Activated CD8-positive, alpha-beta memory T cell treated with anti-CD3 and anti-CD28 coated beads, Interleukin-2, amount 10 ng/mL, durations not matched to agents 7 days and 5 days (primary cell): ENCODE measurements at regions of chr11 and their contacts with region 1.

Region 1: GRCh38 chr11:9534791-9535781 is 38.4 kb upstream of the WEE1 start:
- DNase-seq: peak; percentile 83
- ATAC-seq: peak; percentile 84
- H3K4me3 Mint-ChIP-seq: no peak overlapping the region
- H3K27ac Mint-ChIP-seq: no peak overlapping the region
- H3K4me1 Mint-ChIP-seq: peaks cover 3% of the 10 kb centered on the region
- H3K27me3 Mint-ChIP-seq: no peaks in the 10 kb centered on the region

Region 2: GRCh38 chr11:9489080-9489765 is 45.9 kb before region 1 on chr11:
- CTCF ChIA-PET with region 1: no interaction called
- DNase-seq: no peak
- ATAC-seq: no peak
- H3K4me3 Mint-ChIP-seq: no peak overlapping the region
- H3K27ac Mint-ChIP-seq: no peak overlapping the region
- H3K4me1 Mint-ChIP-seq: peaks cover 2% of the 10 kb centered on the region
- H3K27me3 Mint-ChIP-seq: no peaks in the 10 kb centered on the region

Region 3: GRCh38 chr11:9550191-9550628 is 15.1 kb after region 1 on chr11:
- CTCF ChIA-PET with region 1: interaction called, 11 read pairs
- DNase-seq: no peak
- ATAC-seq: no peak
- H3K4me3 Mint-ChIP-seq: no peak overlapping the region
- H3K27ac Mint-ChIP-seq: no peak overlapping the region
- H3K4me1 Mint-ChIP-seq: peaks cover 3% of the 10 kb centered on the region
- H3K27me3 Mint-ChIP-seq: no peaks in the 10 kb centered on the region

Region 4: GRCh38 chr11:9565822-9566560 is 30.9 kb after region 1 on chr11:
- CTCF ChIA-PET with region 1: interaction called, 28 read pairs
- DNase-seq: peak; percentile 87
- ATAC-seq: peak; percentile 97
- H3K4me3 Mint-ChIP-seq: peak overlapping the region; percentile 40
- H3K27ac Mint-ChIP-seq: peak overlapping the region; percentile 89
- H3K4me1 Mint-ChIP-seq: peaks cover 51% of the 10 kb centered on the region
- H3K27me3 Mint-ChIP-seq: peaks cover 5% of the 10 kb centered on the region

Region 5: GRCh38 chr11:9573052-9573774 is 38.1 kb after region 1 on chr11 and contains the start of gene WEE1:
- CTCF ChIA-PET with region 1: interaction called, 29 read pairs
- DNase-seq: peak; percentile 99
- ATAC-seq: peak; percentile 93
- H3K4me3 Mint-ChIP-seq: peak within 1 kb of the TSS; percentile 89
- H3K27ac Mint-ChIP-seq: peak within 1 kb of the TSS; percentile 87
- H3K4me1 Mint-ChIP-seq: peaks cover 34% of the 10 kb centered on the region
- H3K27me3 Mint-ChIP-seq: peaks cover 8% of the 10 kb centered on the region
- total RNA-seq, gene WEE1: 76.8 to 83.3 TPM

Region 6: GRCh38 chr11:9601037-9601875 is 66.2 kb after region 1 on chr11:
- CTCF ChIA-PET with region 1: interaction called, 20 read pairs
- DNase-seq: peak; percentile 93
- ATAC-seq: peak; percentile 83
- H3K4me3 Mint-ChIP-seq: peak overlapping the region; percentile 66
- H3K27ac Mint-ChIP-seq: peak overlapping the region; percentile 85
- H3K4me1 Mint-ChIP-seq: peaks cover 32% of the 10 kb centered on the region
- H3K27me3 Mint-ChIP-seq: peaks cover 18% of the 10 kb centered on the region

Region 7: GRCh38 chr11:9626496-9627394 is 91.7 kb after region 1 on chr11:
- CTCF ChIA-PET with region 1: no interaction called
- DNase-seq: no peak
- ATAC-seq: no peak
- H3K4me3 Mint-ChIP-seq: no peak overlapping the region
- H3K27ac Mint-ChIP-seq: no peak overlapping the region
- H3K4me1 Mint-ChIP-seq: no peaks in the 10 kb centered on the region
- H3K27me3 Mint-ChIP-seq: peaks cover 32% of the 10 kb centered on the region

Region 8: GRCh38 chr11:9653928-9654280 is 118.8 kb after region 1 on chr11:
- CTCF ChIA-PET with region 1: no interaction called
- DNase-seq: no peak
- ATAC-seq: no peak
- H3K4me3 Mint-ChIP-seq: no peak overlapping the region
- H3K27ac Mint-ChIP-seq: no peak overlapping the region
- H3K4me1 Mint-ChIP-seq: no peaks in the 10 kb centered on the region
- H3K27me3 Mint-ChIP-seq: no peaks in the 10 kb centered on the region

Region 9: DNA sequence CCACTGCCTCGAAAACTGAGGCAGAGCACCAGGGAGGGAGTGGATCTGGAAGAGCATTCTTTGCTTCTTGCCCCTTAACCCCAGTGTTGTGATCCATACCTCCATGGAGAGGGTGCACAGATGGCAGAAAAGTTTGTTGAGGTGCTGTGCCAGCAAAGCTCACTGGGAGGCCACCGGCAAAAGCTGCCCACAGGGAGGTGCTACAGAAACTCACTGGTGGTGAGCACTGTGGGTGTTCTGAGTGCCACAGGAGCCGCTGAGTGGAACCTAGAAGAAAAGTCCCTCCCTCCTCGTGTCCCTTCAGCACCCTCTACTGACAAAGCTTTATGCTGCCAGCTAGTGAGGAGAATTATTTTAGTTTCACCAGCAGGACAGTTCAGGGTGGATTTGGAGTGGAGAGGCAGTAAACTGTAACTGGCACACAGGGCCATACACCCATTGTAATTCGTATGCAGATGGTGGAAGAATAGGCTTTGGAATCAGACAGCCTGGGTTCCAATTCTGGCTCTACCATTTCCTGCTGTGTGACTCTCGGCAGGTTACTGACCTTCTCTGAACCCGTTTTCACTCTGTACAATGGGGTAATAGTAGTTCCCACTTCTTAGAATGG is 213.4 kb after region 1 on chr11:
- CTCF ChIA-PET with region 1: interaction called, 57 read pairs
- DNase-seq: peak; percentile 87
- ATAC-seq: peak; percentile 95
- H3K4me3 Mint-ChIP-seq: no peak overlapping the region
- H3K27ac Mint-ChIP-seq: no peak overlapping the region
- H3K4me1 Mint-ChIP-seq: peaks cover 33% of the 10 kb centered on the region
- H3K27me3 Mint-ChIP-seq: no peaks in the 10 kb centered on the region